Stomach (tissue), 19 donors: ENCODE measurements at regions of chr2 and their contacts with region 1.

Region 1: DNA sequence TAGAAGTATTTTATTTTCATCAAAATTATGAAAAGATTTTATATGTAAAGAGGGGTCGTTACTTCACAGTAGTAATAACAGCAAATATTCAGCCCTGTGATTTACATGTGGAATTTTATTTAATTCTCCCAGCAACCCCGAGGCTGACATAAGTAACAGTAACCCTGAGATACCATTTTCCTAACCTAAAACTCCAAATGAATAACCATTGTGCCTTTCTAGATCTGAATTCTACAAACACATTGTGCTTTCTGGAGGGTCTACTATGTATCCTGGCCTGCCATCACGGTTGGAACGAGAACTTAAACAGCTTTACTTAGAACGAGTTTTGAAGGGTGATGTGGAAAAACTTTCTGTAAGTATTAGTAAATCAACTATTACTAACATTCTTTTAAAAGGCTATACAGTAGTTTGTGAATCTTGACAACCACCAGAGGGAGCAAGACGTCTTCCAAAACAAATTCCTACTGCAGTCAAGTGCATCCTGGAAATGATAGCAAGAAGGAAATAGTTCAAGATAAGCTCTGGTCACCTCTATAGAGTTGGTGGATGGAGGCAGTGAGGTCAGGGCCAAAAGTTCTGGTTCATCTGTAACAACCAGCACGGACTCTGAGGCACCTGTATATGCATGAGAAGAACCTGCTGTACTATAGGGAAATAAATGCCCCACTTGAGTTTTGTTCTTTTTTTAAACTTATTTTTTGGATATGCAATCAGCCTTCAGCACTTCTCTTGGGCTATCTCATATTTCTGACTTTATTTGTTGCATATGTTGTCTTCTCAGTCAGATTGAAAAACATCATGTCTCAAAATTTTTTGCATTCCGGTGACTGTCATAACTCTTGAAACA is 37.4 kb downstream of the ACTR2 start:
- DNase-seq: peak in 1 of 2 donors; percentile 93
- H3K4me3 ChIP-seq: no peak overlapping the region
- H3K27ac ChIP-seq: no peak overlapping the region
- H3K4me1 ChIP-seq: peaks cover 0 to 13% (median 3%) of the 10 kb centered on the region in 4 donors
- H3K27me3 ChIP-seq: no peaks in the 10 kb centered on the region
- CTCF ChIP-seq: peak in 5 of 7 experiments; percentile 41 to 74 (median 64)
- EP300 ChIP-seq: no peak
- POLR2A ChIP-seq: no peak

Region 2: DNA sequence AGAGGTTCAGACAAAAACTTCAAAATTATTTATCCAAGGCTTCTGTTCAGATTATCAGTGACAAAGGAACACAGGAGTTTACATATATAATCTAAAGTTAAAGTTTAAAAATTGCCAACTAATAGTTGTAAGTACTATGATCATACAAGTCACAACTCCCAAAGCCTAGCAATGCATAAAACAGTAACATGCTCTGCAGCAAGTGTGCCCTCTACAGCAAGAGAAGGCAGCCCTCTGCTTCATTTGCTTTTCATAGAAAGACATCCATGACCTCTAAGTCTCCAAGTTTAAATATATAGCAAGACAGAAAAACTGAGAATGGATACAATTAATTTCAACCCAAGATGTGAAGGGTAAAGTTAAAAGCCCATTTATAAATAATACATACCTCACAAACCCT is 148.4 kb before region 1 on chr2:
- intact Hi-C with region 1: no loop called
- DNase-seq: no peak
- H3K4me3 ChIP-seq: no peak overlapping the region
- H3K27ac ChIP-seq: no peak overlapping the region
- H3K4me1 ChIP-seq: peaks cover 41 to 94% (median 67%) of the 10 kb centered on the region in 4 donors
- H3K27me3 ChIP-seq: no peaks in the 10 kb centered on the region
- CTCF ChIP-seq: no peak
- EP300 ChIP-seq: no peak
- POLR2A ChIP-seq: no peak

Region 3: DNA sequence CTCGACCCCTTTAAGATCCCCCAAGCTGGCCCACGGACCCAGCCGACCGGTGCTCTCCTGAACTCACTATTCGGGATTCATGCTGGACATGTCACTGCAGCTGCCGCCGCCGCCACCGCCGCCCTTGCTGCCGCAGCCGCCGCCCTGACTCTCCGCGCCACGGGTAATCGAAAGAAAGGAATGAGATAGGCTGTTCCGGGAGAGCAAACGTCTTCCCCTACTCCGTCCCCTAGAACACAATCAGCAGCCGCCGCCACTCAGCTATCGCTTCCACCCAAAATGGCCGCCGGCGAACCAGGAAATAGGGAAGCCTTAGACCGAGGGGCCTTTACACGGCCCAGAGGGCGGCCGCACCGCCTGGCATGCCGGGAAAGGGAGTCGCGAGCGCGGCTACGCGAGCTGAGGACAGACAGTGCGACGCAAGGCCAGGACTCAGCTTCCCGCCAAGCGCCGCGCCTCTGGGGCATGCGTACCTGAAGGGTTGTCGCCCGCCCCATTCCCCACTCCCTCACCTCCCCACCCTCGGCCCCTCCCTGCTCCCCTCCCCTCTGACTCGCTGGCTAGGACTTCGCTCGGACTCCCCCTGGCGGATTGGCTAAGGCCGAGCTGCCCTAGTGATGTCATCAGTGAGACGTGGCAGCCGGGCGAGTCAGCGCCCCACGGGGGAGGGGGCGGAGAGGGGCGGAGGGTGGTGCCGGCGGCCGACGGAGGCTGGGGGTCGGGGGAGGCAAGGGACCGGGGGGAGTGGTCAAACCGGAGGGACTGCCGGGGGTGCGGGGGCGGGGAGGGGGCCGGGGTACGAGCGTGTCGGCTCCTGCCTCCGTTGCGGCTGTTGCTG is 135.0 kb before region 1 on chr2 and contains the start of gene RAB1A:
- intact Hi-C with region 1: no loop called
- DNase-seq: peak; percentile 99 to 100
- H3K4me3 ChIP-seq: peak within 1 kb of the TSS; percentile 81 to 96 (median 90)
- H3K27ac ChIP-seq: peak within 1 kb of the TSS; percentile 97 to 99 (median 98)
- H3K4me1 ChIP-seq: peaks cover 30 to 46% (median 42%) of the 10 kb centered on the region in 4 donors
- H3K27me3 ChIP-seq: no peaks in the 10 kb centered on the region
- CTCF ChIP-seq: peak in 4 of 7 experiments; percentile 21 to 65 (median 50)
- EP300 ChIP-seq: no peak
- POLR2A ChIP-seq: peak in 1 of 4 donors; percentile 68
- total RNA-seq, gene RAB1A: 58.2 to 143 (median 67.4) TPM

Region 4: DNA sequence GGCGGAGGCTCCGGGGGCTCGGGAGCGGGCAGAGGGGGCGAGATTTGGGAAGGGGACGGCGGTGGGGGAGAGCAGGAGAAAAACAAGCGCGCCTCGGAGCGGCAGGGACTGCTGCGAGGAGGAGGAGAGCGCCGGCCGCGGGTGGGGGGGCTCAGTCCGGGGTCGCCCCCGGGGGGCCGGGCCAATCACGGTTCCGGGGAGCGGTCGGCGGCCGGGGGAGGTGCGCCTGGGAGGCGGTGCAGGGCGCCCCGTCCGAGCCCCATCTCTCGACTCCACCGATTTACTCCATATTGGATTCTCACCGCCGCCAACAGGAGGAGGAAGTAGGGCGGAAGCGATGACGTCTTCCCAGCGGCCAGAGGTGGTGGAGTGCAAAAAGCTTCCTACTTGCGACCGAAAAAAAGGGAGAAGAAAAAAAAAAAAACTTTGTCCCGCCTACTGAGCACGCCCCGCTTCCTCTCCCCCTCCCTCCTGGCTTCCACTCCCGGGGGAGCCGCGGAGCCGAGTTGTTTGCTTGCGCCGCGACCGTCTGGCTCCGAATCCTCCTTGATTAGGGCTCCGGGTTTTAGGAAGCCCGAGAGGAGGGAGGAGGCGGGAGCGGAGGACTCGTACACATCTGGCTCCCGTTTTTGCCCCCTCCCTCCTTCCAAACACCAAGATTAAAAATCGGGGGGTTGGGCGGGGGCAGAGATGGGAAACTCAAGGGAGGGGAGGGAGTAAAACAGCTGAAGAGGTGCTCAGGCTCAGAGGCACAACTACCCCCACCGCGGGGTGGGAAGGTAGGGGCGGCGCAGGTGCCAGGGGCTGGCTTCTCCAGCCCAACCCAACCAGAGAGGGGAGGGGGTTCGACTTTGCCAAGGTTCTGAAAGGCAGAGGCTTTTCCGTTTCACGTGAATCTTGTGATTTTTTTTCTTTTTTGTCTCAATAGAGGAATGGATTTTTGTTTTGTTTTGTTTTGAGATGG is 167.5 kb after region 1 on chr2 and contains the start of gene SPRED2:
- intact Hi-C with region 1: loop called (anchors 10 kb)
- DNase-seq: peak; percentile 90 to 98
- H3K4me3 ChIP-seq: peak within 1 kb of the TSS; percentile 74 to 93 (median 79)
- H3K27ac ChIP-seq: peak within 1 kb of the TSS; percentile 93 to 98 (median 97)
- H3K4me1 ChIP-seq: peaks cover 4 to 42% (median 35%) of the 10 kb centered on the region in 4 donors
- H3K27me3 ChIP-seq: no peaks in the 10 kb centered on the region
- CTCF ChIP-seq: peak in 1 of 7 experiments; percentile 24
- EP300 ChIP-seq: no peak
- POLR2A ChIP-seq: peak in 1 of 4 donors; percentile 5
- total RNA-seq, gene SPRED2: 6.4 to 23.3 (median 12.9) TPM

Region 5: DNA sequence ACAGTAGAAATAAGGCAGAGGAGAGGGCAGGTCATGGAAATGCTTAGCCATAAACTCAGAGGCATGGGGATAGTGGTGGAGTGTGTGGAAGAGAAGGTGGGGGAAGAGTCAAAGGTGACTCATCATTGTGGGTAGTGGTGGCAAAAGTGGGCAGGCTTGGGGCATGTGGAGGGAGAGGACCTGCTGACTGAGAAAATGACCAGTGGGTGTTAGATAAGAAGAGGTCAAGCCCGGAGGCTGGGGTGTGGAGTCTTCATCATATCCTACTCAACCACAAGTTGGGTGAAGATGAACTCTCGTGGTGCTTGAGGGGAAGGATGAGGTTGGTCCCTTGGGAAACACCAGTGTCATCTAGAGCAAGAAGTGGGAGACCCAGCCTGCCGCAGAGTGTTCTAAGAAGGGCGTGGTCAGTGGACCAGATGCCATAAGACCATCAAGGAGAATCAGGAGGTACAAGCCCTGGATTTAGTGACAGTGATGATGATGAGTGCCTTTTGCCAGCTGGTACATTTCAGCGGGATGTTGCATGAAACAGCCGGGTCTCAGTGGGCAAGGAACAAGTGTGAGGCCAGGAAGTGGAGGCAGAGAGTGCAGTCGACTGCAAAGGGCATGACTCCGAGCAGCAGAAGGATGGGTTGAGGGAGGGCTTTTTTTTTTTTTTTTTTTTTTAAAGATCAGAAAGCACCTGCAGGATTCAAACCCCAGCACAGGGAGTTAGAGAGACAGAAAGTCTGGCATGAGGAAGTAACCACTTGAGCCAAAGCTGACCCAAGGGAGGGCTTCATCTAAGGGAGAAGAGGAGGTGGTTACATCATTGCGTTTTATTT is 289.9 kb after region 1 on chr2:
- intact Hi-C with region 1: loop called (anchors 10 kb)
- DNase-seq: no peak
- H3K4me3 ChIP-seq: no peak overlapping the region
- H3K27ac ChIP-seq: no peak overlapping the region
- H3K4me1 ChIP-seq: peaks cover 0 to 8% (median 4%) of the 10 kb centered on the region in 4 donors
- H3K27me3 ChIP-seq: no peaks in the 10 kb centered on the region
- CTCF ChIP-seq: no peak
- EP300 ChIP-seq: no peak
- POLR2A ChIP-seq: no peak